AG04449 (cell line): ENCODE measurements at regions of chr20 and their contacts with region 1.

Region 1: DNA sequence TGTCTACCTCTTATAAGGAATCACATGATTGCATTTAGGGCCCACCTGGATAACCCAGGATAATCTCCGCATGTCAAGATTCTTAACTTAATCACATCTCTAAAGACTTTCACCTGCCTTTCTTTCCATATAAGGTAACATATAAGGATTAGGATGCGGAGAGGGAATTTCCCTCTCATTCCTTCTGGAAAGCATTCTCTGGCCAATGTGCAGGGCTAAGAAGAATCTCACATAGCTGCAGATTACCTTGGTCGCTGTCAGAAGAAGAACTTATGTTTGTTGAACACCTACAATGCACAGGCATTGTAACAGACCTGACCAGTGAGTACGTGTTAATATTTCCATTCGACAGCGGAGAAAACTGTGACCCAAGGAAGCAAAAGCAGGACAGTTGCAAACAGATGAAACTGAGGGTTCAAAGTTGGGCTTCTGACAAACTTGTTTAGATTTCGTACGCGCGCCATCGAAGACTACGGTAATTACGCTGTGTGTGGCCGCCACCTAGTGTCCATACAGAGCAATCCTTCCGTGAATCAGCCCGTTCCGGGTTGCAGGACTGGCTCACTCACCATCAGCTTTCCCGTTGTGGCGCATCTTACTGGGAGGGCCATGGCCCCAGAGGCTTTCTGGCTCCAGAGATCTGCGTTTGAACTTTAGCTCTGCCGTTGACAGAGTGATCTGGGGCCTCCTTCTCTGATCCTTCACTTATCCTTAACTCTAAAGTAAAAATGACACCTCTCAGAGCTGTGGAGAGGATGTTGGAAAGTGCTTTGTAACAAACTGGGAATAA is 9.5 kb downstream of the C20orf202 start:
- DNase-seq: peak; percentile 14
- H3K4me3 ChIP-seq: no peak overlapping the region
- CTCF ChIP-seq: peak; percentile 85

Region 2: DNA sequence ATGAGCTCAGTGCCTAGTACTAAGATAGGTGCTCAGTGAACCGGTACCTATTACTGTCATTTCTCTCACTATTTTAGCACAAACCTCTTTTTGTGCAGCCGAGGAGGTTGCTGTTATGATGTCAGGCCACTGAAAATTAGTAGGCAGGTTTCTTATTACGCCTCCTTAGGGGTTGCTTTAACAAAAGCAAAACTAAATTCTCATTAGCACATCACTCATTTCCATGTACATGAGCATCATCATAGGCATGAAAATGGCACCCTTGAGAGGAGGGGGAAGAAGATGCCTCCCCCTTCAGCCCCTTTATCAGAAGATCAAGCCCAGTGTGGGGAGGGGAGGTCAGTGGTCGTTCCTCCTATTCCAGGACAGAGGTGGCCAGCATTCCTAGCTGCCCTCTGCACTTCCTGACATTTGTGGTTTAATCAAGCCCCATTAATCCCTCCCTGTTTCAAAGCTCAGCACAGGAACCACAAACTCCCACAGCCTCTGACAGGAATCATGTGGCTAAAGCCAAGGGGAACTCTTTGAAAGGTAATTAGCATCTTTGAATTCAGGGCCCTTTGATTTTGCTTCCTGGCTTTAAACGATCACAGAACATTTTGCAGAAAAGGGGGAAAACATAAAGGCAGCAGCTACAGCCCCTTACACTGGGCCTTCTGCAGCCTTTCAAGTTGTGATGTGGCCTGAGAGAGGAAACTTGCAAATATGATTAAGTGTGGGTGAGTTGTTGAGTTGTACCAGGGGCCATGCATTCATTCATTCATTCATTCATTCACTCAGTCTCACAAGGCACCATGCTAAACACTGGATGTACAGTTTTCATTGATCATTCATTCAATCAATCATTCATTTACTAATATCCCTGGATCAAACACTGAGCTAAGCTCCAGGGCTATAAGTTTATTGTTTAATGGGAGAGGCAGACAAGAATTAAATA is 126.3 kb before region 1 on chr20:
- CTCF ChIA-PET with region 1: no interaction called
- POLR2A ChIA-PET with region 1: no interaction called
- DNase-seq: no peak
- H3K4me3 ChIP-seq: no peak overlapping the region
- CTCF ChIP-seq: no peak

Region 3: GRCh38 chr20:1101533-1101932 is 111.3 kb before region 1 on chr20:
- CTCF ChIA-PET with region 1: no interaction called
- POLR2A ChIA-PET with region 1: no interaction called
- DNase-seq: no peak
- H3K4me3 ChIP-seq: no peak overlapping the region
- CTCF ChIP-seq: no peak

Region 4: GRCh38 chr20:1199212-1199873 is 13.5 kb before region 1 on chr20:
- CTCF ChIA-PET with region 1: interaction called, 14 read pairs
- POLR2A ChIA-PET with region 1: no interaction called
- DNase-seq: no peak
- H3K4me3 ChIP-seq: no peak overlapping the region
- CTCF ChIP-seq: no peak

Region 5: GRCh38 chr20:1225783-1226654 is 13.2 kb after region 1 on chr20 and contains the start of gene RAD21L1:
- CTCF ChIA-PET with region 1: interaction called, 10 read pairs
- POLR2A ChIA-PET with region 1: no interaction called
- DNase-seq: no peak
- H3K4me3 ChIP-seq: peak within 1 kb of the TSS; percentile 67
- CTCF ChIP-seq: no peak